Body of pancreas (tissue), 4 donors: ENCODE measurements at regions of chr1 and their contacts with region 1.

Region 1: GRCh38 chr1:222728746-222729145 is 8.3 kb upstream of the FAM177B start:
- DNase-seq: no peak
- ATAC-seq: no peak
- H3K4me3 ChIP-seq: no peak overlapping the region
- H3K27ac ChIP-seq: no peak overlapping the region
- H3K4me1 ChIP-seq: no peaks in the 10 kb centered on the region
- H3K27me3 ChIP-seq: no peaks in the 10 kb centered on the region
- CTCF ChIP-seq: no peak
- POLR2A ChIP-seq: no peak

Region 2: GRCh38 chr1:222654849-222655248 is 73.9 kb before region 1 on chr1:
- intact Hi-C with region 1: loop called (anchors 10 kb)
- DNase-seq: peak in 1 of 4 donors; percentile 48
- ATAC-seq: no peak
- H3K4me3 ChIP-seq: no peak overlapping the region
- H3K27ac ChIP-seq: peak overlapping the region in 1 of 4 donors; percentile 38
- H3K4me1 ChIP-seq: no peaks in the 10 kb centered on the region
- H3K27me3 ChIP-seq: no peaks in the 10 kb centered on the region
- CTCF ChIP-seq: no peak
- POLR2A ChIP-seq: no peak